Activated CD4-positive, alpha-beta memory T cell treated with anti-CD3 and anti-CD28 coated beads, Interleukin-2, amount 10 ng/mL, durations not matched to agents 7 days and 5 days (primary cell): ENCODE measurements at regions of chr17 and their contacts with region 1.

Region 1: GRCh38 chr17:40417609-40418427 is at the start of gene TOP2A:
- DNase-seq: peak; percentile 97
- H3K4me3 Mint-ChIP-seq: peak within 1 kb of the TSS; percentile 97
- H3K27ac Mint-ChIP-seq: peak within 1 kb of the TSS; percentile 92
- H3K4me1 Mint-ChIP-seq: peaks cover 47% of the 10 kb centered on the region
- H3K27me3 Mint-ChIP-seq: peaks cover 4% of the 10 kb centered on the region
- total RNA-seq, gene TOP2A: 361 to 373 TPM

Region 2: DNA sequence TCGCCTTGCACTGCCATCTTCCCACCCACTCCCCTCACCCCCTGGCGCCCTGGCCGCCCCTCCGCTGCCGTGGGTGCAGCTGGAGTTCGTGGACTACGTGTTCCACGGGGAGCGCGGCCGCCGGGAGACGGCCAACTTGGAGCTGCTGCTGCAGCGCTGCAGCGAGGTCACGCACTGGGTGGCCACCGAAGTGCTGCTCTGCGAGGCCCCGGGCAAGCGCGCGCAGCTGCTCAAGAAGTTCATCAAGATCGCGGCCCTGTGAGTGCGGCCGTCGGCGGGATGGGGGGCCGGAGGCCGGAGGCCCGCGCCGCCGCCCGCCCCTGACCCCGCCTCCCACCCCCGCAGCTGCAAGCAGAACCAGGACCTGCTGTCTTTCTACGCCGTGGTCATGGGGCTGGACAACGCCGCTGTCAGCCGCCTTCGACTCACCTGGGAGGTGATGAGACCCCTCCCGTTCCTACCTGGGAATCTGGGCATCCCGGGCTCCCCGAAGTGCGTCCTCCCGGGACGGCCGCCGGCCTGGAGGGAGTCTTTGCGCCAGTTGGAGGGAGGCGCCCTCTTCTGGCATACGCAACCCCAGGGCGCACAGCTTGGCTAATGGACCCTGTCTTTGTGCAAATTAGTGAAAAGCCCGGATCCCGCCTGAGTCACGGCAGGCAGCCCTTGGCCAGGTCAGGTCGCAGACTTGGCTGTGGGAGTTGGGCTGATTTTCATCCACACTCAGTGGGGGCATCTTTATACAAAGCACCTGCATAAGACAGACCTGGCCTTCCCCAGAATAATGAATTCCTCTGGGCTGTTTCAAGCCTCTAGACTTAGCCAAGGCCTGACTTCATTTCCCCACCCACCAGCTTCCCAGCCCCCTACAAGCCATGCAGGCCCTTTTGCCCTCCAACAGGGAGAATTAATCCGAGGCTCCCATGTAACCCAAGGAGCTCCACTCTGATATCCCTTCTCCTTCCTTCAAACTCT is 226.3 kb before region 1 on chr17:
- CTCF ChIA-PET with region 1: no interaction called
- POLR2A ChIA-PET with region 1: no interaction called
- DNase-seq: peak; percentile 75
- H3K4me3 Mint-ChIP-seq: peak overlapping the region; percentile 94
- H3K27ac Mint-ChIP-seq: no peak overlapping the region
- H3K4me1 Mint-ChIP-seq: peaks cover 15% of the 10 kb centered on the region
- H3K27me3 Mint-ChIP-seq: peaks cover 2% of the 10 kb centered on the region

Region 3: GRCh38 chr17:40224718-40225550 is 192.9 kb before region 1 on chr17:
- CTCF ChIA-PET with region 1: no interaction called
- POLR2A ChIA-PET with region 1: no interaction called
- DNase-seq: no peak
- H3K4me3 Mint-ChIP-seq: no peak overlapping the region
- H3K27ac Mint-ChIP-seq: no peak overlapping the region
- H3K4me1 Mint-ChIP-seq: peaks cover 27% of the 10 kb centered on the region
- H3K27me3 Mint-ChIP-seq: no peaks in the 10 kb centered on the region

Region 4: GRCh38 chr17:40387680-40388079 is 30.1 kb before region 1 on chr17:
- CTCF ChIA-PET with region 1: interaction called, 4 read pairs
- POLR2A ChIA-PET with region 1: interaction called, 12 read pairs
- DNase-seq: no peak
- H3K4me3 Mint-ChIP-seq: no peak overlapping the region
- H3K27ac Mint-ChIP-seq: no peak overlapping the region
- H3K4me1 Mint-ChIP-seq: no peaks in the 10 kb centered on the region
- H3K27me3 Mint-ChIP-seq: no peaks in the 10 kb centered on the region

Region 5: DNA sequence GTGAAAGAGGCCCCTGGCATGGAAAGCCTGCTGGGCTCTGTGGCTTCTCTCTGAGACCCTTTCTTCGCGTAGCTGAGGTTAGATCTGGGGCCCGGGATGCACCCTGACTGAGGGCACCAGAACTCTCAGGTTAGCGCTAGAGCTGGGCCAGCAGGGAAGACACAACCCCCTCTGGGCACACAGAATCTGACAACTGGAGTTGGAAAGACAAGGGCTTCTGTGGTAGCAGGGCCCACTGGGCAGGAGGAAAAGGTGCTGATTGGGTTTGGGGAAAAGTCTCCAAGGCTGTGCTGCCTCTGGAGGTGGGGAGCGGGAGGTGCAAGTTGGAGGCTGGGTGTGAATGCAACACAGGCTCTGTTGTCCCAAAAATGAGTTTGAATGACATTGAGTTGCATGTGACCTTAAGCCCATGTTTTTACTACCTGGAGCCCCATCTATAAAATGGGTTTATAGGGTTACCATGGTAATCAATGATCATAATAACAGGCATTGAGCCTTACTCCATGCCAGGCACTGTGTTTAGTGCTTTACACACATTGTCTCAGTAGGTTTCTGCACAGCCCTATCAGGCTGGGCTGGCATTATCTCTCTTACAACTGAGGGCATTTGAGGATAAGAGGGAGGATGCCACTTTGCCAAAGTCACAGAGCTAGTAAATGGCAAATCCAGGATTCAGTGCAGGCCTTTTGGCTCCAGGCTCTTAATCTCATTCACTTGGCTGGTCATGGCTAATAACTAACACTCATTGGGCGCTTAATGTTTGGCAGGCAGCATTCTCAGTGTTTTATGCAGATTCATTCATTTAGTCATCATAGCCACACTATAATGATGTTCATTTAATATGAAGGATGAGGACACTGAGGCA is 16.0 kb after region 1 on chr17:
- CTCF ChIA-PET with region 1: interaction called, 5 read pairs
- POLR2A ChIA-PET with region 1: interaction called, 12 read pairs
- DNase-seq: peak; percentile 44
- H3K4me3 Mint-ChIP-seq: no peak overlapping the region
- H3K27ac Mint-ChIP-seq: no peak overlapping the region
- H3K4me1 Mint-ChIP-seq: peaks cover 14% of the 10 kb centered on the region
- H3K27me3 Mint-ChIP-seq: peaks cover 31% of the 10 kb centered on the region

Region 6: GRCh38 chr17:40462343-40463121 is 44.7 kb after region 1 on chr17:
- CTCF ChIA-PET with region 1: no interaction called
- POLR2A ChIA-PET with region 1: no interaction called
- DNase-seq: no peak
- H3K4me3 Mint-ChIP-seq: no peak overlapping the region
- H3K27ac Mint-ChIP-seq: no peak overlapping the region
- H3K4me1 Mint-ChIP-seq: no peaks in the 10 kb centered on the region
- H3K27me3 Mint-ChIP-seq: peaks cover 11% of the 10 kb centered on the region

Region 7: DNA sequence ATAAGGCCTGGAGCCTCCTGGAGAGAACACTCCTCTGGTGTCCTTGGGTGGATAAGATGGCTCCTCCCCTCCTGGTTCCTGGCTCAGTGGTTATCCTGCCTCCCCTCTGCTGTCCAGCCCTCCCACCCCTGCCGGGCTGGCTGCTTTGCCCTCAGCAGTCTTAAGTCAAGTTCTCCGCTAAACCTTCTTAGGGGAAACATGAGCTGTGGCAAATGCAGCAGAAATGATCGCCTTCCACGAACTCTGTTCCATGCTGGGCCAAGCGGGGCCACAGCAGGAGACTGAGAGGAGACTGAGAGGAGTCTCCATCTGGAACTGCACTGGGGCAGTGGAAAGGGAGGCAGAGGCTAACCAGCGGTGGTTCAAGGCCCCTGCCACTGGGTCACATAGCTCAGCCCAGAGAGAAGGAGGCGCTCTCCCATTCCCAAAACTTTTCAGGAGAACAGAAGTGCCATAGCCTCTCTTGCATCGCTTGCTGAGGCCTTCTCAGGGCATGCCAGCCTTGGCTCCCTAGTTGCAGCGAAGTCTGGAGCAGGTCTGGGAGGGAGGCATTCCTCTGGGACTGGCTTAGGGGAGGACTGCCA is 56.7 kb after region 1 on chr17:
- CTCF ChIA-PET with region 1: interaction called, 15 read pairs
- POLR2A ChIA-PET with region 1: interaction called, 31 read pairs
- DNase-seq: no peak
- H3K4me3 Mint-ChIP-seq: no peak overlapping the region
- H3K27ac Mint-ChIP-seq: no peak overlapping the region
- H3K4me1 Mint-ChIP-seq: peaks cover 30% of the 10 kb centered on the region
- H3K27me3 Mint-ChIP-seq: peaks cover 11% of the 10 kb centered on the region

Region 8: GRCh38 chr17:40497690-40498089 is 79.9 kb after region 1 on chr17:
- CTCF ChIA-PET with region 1: interaction called, 5 read pairs
- POLR2A ChIA-PET with region 1: interaction called, 10 read pairs
- DNase-seq: no peak
- H3K4me3 Mint-ChIP-seq: no peak overlapping the region
- H3K27ac Mint-ChIP-seq: no peak overlapping the region
- H3K4me1 Mint-ChIP-seq: no peaks in the 10 kb centered on the region
- H3K27me3 Mint-ChIP-seq: peaks cover 16% of the 10 kb centered on the region

Region 9: GRCh38 chr17:40536295-40537171 is 118.7 kb after region 1 on chr17:
- CTCF ChIA-PET with region 1: interaction called, 102 read pairs
- POLR2A ChIA-PET with region 1: interaction called, 90 read pairs
- DNase-seq: no peak
- H3K4me3 Mint-ChIP-seq: no peak overlapping the region
- H3K27ac Mint-ChIP-seq: no peak overlapping the region
- H3K4me1 Mint-ChIP-seq: peaks cover 73% of the 10 kb centered on the region
- H3K27me3 Mint-ChIP-seq: peaks cover 32% of the 10 kb centered on the region